Astrocyte of the cerebellum (primary cell): ENCODE measurements at regions of chr15 and their contacts with region 1.

Region 1: DNA sequence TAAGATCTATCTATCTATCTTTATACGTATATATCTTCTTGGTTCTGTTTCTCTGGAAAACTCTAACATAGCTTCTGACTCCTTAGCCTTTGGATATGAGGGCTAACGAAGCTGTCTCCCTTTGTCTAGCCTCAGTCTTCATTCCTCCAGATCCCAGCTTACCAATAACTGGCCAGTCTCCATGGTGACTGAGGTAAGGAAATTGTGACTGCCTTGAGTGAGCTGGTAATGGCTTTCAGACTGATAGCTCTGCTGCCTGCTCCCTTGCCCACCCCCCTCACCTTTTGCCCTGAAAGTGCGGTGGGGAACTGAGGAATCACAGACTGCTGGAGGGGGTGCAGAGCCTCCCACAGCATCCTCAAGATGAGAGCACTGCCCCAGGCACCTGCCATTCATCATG is 65.8 kb upstream of the ABHD17C start:
- DNase-seq: no peak
- H3K4me3 ChIP-seq: no peak overlapping the region
- CTCF ChIP-seq: no peak

Region 2: DNA sequence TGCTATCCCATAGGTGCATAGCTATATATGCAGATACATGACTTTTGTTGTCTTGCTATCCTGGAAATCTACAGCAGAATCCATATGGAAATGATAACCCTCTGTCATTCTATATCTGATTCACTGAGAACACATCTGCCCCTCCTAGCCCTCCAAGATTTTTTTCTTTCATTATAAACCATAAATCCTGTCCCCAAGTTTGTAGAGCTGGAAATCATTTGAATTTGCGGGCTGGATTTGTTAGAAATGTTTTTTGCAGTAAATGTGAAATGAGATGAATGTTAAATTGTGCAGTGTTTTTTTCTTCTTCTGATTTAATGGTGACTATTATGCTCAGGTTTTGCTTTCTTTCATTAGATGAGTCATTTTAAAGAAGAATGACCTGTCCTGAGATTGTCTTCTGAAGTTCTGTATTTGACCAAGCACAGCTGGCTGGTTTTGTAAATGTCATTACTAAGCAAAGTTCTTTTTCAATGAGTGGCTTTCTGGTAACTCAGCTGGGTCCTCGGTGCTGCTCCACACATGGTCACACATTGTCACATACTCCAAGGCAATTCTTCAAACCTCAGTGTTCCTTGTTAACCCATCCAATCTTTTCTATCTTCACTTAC is 40.4 kb after region 1 on chr15:
- in situ Hi-C with region 1: loop called (anchors 5 kb)
- DNase-seq: no peak
- H3K4me3 ChIP-seq: no peak overlapping the region
- CTCF ChIP-seq: no peak